ENCODE measurements at regions of chr2 and their contacts with region 1.

Region 1: DNA sequence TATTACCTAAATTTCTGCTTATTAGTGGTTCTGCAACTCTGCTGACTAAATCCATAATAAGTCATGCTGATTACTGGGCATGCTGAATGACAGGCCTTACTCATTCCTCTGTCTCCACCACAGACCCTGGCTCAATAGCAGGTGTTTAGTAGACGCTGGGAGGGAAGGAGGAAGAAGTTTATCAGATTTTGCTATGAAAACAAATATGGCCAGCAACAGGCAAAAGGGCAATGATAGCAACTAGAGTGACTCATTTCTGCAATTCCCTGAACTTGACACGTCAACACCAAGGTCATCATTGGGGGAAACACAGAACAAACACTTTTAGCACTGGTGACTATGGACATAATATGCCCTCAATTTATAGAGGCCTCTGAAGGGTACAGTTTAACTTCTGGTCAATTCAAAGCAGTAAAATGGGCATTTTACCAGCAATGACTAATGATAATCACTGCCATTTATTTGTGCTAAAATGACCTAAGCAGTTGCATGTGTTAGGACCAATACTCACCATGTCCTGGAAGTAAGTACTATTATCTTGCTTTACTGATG is 35.2 kb downstream of the TMEM163 start:
- DNase-seq: peak; percentile 43
- ATAC-seq: peak; percentile 86
- H3K4me3 Mint-ChIP-seq: no peak overlapping the region
- H3K27ac Mint-ChIP-seq: no peak overlapping the region
- H3K4me1 Mint-ChIP-seq: peaks cover 37% of the 10 kb centered on the region
- H3K27me3 Mint-ChIP-seq: peaks cover 2% of the 10 kb centered on the region

Region 2: GRCh38 chr2:134668821-134669220 is 14.8 kb before region 1 on chr2:
- CTCF ChIA-PET with region 1: interaction called, 3 read pairs
- POLR2A ChIA-PET with region 1: interaction called, 4 read pairs
- intact Hi-C with region 1: loop called (anchors 1 to 2 kb)
- DNase-seq: peak; percentile 89
- ATAC-seq: peak; percentile 92
- H3K4me3 Mint-ChIP-seq: no peak overlapping the region
- H3K27ac Mint-ChIP-seq: peak overlapping the region; percentile 32
- H3K4me1 Mint-ChIP-seq: peaks cover 67% of the 10 kb centered on the region
- H3K27me3 Mint-ChIP-seq: peaks cover 9% of the 10 kb centered on the region

Region 3: GRCh38 chr2:134712736-134713135 is 29.1 kb after region 1 on chr2:
- CTCF ChIA-PET with region 1: no interaction called
- POLR2A ChIA-PET with region 1: no interaction called
- intact Hi-C with region 1: loop called in 1 of 2 experiments (anchors 2 kb)
- DNase-seq: no peak
- ATAC-seq: no peak
- H3K4me3 Mint-ChIP-seq: no peak overlapping the region
- H3K27ac Mint-ChIP-seq: no peak overlapping the region
- H3K4me1 Mint-ChIP-seq: peaks cover 27% of the 10 kb centered on the region
- H3K27me3 Mint-ChIP-seq: peaks cover 50% of the 10 kb centered on the region

Measured in activated CD4-positive, alpha-beta T cell treated with anti-CD3 and anti-CD28 coated beads for 36 hours (primary cell).